Calu3 (cell line): ENCODE measurements at regions of chr3 and their contacts with region 1.

Region 1: GRCh38 chr3:179330438-179330837 is 7.6 kb downstream of the ZNF639 start:
- DNase-seq: no peak
- H3K4me3 Mint-ChIP-seq: no peak overlapping the region
- H3K27ac Mint-ChIP-seq: no peak overlapping the region
- H3K4me1 Mint-ChIP-seq: peaks cover under 1% of the 10 kb centered on the region
- H3K27me3 Mint-ChIP-seq: no peaks in the 10 kb centered on the region
- CTCF ChIP-seq: no peak

Region 2: GRCh38 chr3:179710079-179710478 is 379.6 kb after region 1 on chr3:
- CTCF ChIA-PET with region 1: interaction called, 10 read pairs
- intact Hi-C with region 1: no loop called
- DNase-seq: no peak
- H3K4me3 Mint-ChIP-seq: no peak overlapping the region
- H3K27ac Mint-ChIP-seq: no peak overlapping the region
- H3K4me1 Mint-ChIP-seq: no peaks in the 10 kb centered on the region
- H3K27me3 Mint-ChIP-seq: no peaks in the 10 kb centered on the region
- CTCF ChIP-seq: no peak